ENCODE measurements at regions of chr11 and their contacts with region 1.

Region 1: DNA sequence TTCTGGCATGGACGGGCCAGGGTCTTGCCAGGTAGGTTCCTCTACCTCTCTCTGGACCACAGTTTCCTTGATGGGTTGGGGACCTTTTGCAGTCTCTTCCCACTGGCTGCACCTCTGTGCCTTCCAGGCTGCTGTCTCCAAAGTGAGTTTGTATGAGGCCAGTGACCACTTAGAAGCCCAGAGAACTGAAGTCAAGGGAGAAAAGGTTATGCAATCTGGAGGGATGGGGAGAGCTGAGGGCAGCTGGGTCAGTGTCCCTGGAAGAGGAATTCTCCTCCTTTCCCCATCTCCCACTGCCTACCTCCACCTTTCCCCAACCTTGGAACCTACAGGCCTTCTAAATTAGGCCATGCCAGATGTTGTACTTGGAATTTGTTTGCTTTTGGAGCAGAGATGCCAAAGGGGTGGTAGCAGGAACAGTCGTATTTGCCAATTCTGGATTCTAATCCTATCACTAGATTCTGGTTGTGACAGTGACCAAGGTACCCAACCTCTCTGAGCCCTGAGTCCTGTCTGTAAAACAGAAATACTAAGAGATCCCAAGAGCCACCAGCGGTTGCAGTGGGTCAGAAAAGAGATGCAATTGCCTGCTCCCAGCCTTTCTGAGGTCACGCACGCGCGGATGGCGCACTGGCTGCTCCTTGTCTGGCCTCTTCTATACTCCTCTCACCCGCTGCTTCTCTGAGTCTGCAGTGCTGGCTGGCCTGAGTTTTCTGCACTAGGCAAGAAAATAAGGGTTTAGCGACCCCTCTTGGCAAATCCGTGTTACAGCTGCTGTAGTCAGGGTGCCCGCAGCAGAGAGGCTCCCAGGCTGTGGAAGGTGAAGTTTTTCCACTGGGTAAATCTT is 10.7 kb upstream of the ACCSL start:
- DNase-seq: peak; percentile 43 to 65 (median 65)
- ATAC-seq: peak; percentile 83
- H3K4me3 ChIP-seq: no peak overlapping the region
- H3K4me1 ChIP-seq: no peaks in the 10 kb centered on the region
- CTCF ChIP-seq: peak; percentile 24

Region 2: GRCh38 chr11:43895601-43896000 is 141.4 kb before region 1 on chr11:
- intact Hi-C with region 1: loop called (anchors 5 to 10 kb)
- DNase-seq: no peak
- ATAC-seq: no peak
- H3K4me3 ChIP-seq: no peak overlapping the region
- H3K4me1 ChIP-seq: no peaks in the 10 kb centered on the region
- CTCF ChIP-seq: no peak

Region 3: GRCh38 chr11:43969543-43969942 is 67.5 kb before region 1 on chr11:
- intact Hi-C with region 1: no loop called
- DNase-seq: no peak
- ATAC-seq: no peak
- H3K4me3 ChIP-seq: no peak overlapping the region
- H3K4me1 ChIP-seq: no peaks in the 10 kb centered on the region
- CTCF ChIP-seq: no peak

Region 4: DNA sequence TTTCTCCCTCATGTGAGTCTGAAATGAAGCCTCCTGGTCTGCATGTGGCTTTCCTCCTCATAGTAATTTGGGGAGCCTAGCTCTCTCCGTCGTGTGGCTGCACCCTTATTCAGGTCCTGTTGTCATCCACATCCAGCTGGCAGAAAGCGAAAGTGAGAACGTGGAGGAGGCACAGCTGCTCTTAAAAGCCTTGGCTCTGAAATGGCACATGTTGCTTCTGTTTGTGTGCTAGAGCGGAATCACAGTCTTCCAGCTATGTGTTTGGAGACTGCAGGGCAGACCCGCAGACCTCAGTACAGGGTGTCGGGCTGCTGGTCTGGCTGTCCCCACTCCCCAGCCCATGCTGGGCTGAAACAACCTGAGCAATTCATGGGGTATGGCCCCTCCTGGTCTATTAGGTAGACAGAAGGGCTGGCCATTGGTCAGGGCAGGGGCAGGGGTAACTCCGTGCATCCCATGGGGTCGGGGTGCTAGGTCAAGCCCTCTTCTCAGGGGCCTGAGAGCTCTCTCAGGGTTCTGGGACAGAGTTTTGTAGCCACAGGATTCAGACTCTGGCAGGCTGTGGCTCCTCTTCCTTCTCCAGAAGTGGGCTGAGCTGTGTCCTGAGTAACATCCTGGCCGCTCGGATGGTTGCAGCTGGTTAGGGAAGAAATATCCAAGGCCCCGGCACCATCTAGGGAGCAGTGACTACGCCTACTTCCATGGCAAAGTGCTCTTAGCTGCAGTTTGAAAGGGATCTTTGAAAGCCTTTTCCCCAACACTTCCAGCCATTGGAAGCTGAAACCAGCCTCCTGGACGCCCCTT is 44.0 kb before region 1 on chr11:
- intact Hi-C with region 1: no loop called
- DNase-seq: peak in 1 of 3 donors; percentile 22
- ATAC-seq: peak; percentile 46
- H3K4me3 ChIP-seq: no peak overlapping the region
- H3K4me1 ChIP-seq: no peaks in the 10 kb centered on the region
- CTCF ChIP-seq: no peak

Region 5: DNA sequence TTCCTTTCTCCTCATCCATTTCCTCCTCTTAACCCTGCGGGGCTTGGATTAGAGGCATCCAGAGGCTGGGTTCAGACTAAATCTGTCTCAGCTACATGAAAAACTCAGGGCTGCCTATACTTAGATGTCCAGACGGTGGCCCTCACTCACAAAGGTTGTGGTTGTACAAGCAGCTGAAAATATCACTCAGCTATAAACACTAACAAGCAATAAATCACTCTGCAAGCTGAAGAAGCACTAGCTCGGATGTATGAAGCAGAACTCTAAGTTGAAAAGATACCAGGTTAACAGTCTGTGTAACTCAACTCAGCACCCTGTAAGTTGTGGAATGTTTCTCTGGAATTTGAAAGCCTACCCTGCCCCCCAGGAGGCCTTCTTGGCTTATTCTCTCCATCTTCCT is 141.3 kb after region 1 on chr11:
- intact Hi-C with region 1: no loop called
- DNase-seq: no peak
- ATAC-seq: no peak
- H3K4me3 ChIP-seq: no peak overlapping the region
- H3K4me1 ChIP-seq: no peaks in the 10 kb centered on the region
- CTCF ChIP-seq: no peak

Measured in mucosa of descending colon (tissue), 3 donors.